Natural killer cell (primary cell): ENCODE measurements at regions of chr7 and their contacts with region 1.

Region 1: GRCh38 chr7:133230591-133231194 is 22.2 kb upstream of the EXOC4 start:
- DNase-seq: peak; percentile 27 to 71
- ATAC-seq: peak in 2 of 3 donors; percentile 66 to 72
- H3K4me3 ChIP-seq: no peak overlapping the region
- H3K4me3 Mint-ChIP-seq: no peak overlapping the region
- H3K27ac ChIP-seq: no peak overlapping the region
- H3K27ac Mint-ChIP-seq: no peak overlapping the region
- H3K4me1 ChIP-seq: no peaks in the 10 kb centered on the region
- H3K4me1 Mint-ChIP-seq: no peaks in the 10 kb centered on the region
- H3K27me3 ChIP-seq: no peaks in the 10 kb centered on the region
- H3K27me3 Mint-ChIP-seq: peaks cover 24 to 50% of the 10 kb centered on the region in 2 donors
- CTCF ChIP-seq: peak; percentile 59

Region 2: GRCh38 chr7:132709971-132710567 is 520.6 kb before region 1 on chr7:
- intact Hi-C with region 1: loop called (anchors 2 kb)
- DNase-seq: peak in 1 of 2 donors; percentile 46
- ATAC-seq: no peak
- H3K4me3 ChIP-seq: no peak overlapping the region
- H3K4me3 Mint-ChIP-seq: no peak overlapping the region
- H3K27ac ChIP-seq: no peak overlapping the region
- H3K27ac Mint-ChIP-seq: no peak overlapping the region
- H3K4me1 ChIP-seq: no peaks in the 10 kb centered on the region
- H3K4me1 Mint-ChIP-seq: no peaks in the 10 kb centered on the region
- H3K27me3 ChIP-seq: no peaks in the 10 kb centered on the region
- H3K27me3 Mint-ChIP-seq: no peaks in the 10 kb centered on the region
- CTCF ChIP-seq: no peak

Region 3: GRCh38 chr7:132793474-132793873 is 437.2 kb before region 1 on chr7:
- intact Hi-C with region 1: no loop called
- DNase-seq: no peak
- ATAC-seq: no peak
- H3K4me3 ChIP-seq: no peak overlapping the region
- H3K4me3 Mint-ChIP-seq: no peak overlapping the region
- H3K27ac ChIP-seq: no peak overlapping the region
- H3K27ac Mint-ChIP-seq: no peak overlapping the region
- H3K4me1 ChIP-seq: no peaks in the 10 kb centered on the region
- H3K4me1 Mint-ChIP-seq: peaks cover 15 to 21% of the 10 kb centered on the region in 2 donors
- H3K27me3 ChIP-seq: no peaks in the 10 kb centered on the region
- H3K27me3 Mint-ChIP-seq: no peaks in the 10 kb centered on the region
- CTCF ChIP-seq: no peak

Region 4: GRCh38 chr7:133118261-133118660 is 112.4 kb before region 1 on chr7:
- intact Hi-C with region 1: no loop called
- DNase-seq: no peak
- ATAC-seq: no peak
- H3K4me3 ChIP-seq: no peak overlapping the region
- H3K4me3 Mint-ChIP-seq: no peak overlapping the region
- H3K27ac ChIP-seq: no peak overlapping the region
- H3K27ac Mint-ChIP-seq: no peak overlapping the region
- H3K4me1 ChIP-seq: no peaks in the 10 kb centered on the region
- H3K4me1 Mint-ChIP-seq: no peaks in the 10 kb centered on the region
- H3K27me3 ChIP-seq: peaks cover 3% of the 10 kb centered on the region
- H3K27me3 Mint-ChIP-seq: peaks cover 20 to 40% of the 10 kb centered on the region in 2 donors
- CTCF ChIP-seq: no peak